Activated T-helper 1 cell treated with anti-CD3 and anti-CD28 coated beads, Interleukin-12 subunit alpha, Interleukin-12 subunit beta, Interleukin-2, Interleukin-4 antibody, amounts not matched to agents 30 ng/mL and 10 ng/mL and 1 ng/mL, durations not matched to agents 14 hours and 24 hours and 36 hours (primary cell): ENCODE measurements at regions of chr17 and their contacts with region 1.

Region 1: GRCh38 chr17:5486204-5487124 is at the start of gene MIS12:
- DNase-seq: peak; percentile 95
- H3K4me3 Mint-ChIP-seq: peak within 1 kb of the TSS; percentile 98
- H3K27ac Mint-ChIP-seq: peak within 1 kb of the TSS; percentile 96
- H3K4me1 Mint-ChIP-seq: peaks cover 49% of the 10 kb centered on the region
- H3K27me3 Mint-ChIP-seq: no peaks in the 10 kb centered on the region
- total RNA-seq, gene MIS12: 38.1 and 39.6 TPM in 2 replicates

Region 2: DNA sequence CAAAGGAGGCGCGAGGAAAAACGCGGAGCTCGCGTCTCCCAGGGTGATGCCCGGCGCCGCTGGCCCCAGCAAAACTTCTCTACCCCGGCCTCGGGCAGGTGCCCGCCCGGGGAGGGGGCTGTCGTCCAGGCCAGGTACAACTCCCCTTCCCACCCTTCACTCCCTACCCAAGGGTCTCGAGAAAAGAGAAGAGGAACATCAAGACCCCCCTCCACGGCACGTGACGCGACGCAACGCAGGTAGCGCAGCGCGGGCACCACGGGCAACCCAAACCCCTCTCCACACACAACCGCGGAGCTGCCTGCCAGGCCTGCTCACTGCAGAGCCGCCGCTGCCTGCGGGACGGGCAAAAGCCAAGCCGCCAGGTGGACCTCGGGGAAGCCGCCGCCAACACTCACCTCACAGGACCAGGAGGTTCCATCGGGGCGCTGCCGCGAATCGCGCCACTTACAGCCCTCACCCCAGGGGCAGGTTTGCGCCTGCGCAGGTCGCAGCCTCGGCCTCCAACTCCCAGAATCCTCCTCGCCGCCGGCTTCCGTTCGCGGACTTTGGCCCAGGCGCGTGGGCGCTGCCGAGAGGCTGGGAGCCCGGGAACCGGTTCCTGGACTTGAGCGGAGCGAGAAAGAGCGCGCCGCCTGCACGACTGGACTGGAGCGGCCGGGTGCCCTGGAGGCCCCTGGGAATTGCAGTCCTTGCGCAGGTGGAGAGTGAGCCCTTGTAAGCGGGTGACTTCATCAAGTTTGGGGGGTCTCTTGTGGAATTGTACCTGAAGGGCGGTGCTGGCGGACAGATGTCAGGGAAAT is 374.9 kb before region 1 on chr17 and contains the start of gene ZNF232:
- intact Hi-C with region 1: loop called (anchors 5 kb)
- DNase-seq: peak; percentile 91
- H3K4me3 Mint-ChIP-seq: peak within 1 kb of the TSS; percentile 86
- H3K27ac Mint-ChIP-seq: peak within 1 kb of the TSS; percentile 79
- H3K4me1 Mint-ChIP-seq: peaks cover 13% of the 10 kb centered on the region
- H3K27me3 Mint-ChIP-seq: peaks cover 6% of the 10 kb centered on the region
- total RNA-seq, gene ZNF232: 17.3 and 19.3 TPM in 2 replicates

Region 3: GRCh38 chr17:5419356-5419958 is 67.0 kb before region 1 on chr17 and contains the start of gene NUP88:
- intact Hi-C with region 1: loop called (anchors 1 kb)
- DNase-seq: peak; percentile 95
- H3K4me3 Mint-ChIP-seq: peak within 1 kb of the TSS; percentile 100
- H3K27ac Mint-ChIP-seq: peak within 1 kb of the TSS; percentile 99
- H3K4me1 Mint-ChIP-seq: peaks cover 32% of the 10 kb centered on the region
- H3K27me3 Mint-ChIP-seq: no peaks in the 10 kb centered on the region
- total RNA-seq, gene NUP88: 165 and 170 TPM in 2 replicates

Region 4: DNA sequence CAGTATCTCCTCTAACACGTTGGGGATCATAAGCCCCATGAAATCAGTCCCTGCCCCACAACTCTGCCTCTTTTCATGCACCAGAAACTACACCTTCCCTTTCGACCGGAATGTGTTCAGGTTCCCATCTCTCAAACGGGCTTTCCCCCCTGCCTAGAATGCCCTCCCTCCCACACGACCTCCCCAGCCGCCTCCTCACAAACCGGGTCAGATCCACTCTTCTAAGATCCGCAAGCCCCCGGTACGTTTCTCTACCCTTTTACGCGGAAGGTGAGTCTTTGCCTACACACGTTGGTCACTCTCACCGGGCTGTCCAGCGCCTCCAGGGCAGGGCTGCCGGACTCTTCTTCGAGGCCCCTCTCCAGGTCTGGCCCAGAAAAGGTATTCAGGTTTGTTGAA is 18.4 kb before region 1 on chr17:
- intact Hi-C with region 1: loop called (anchors 1 kb)
- DNase-seq: no peak
- H3K4me3 Mint-ChIP-seq: peak overlapping the region; percentile 92
- H3K27ac Mint-ChIP-seq: peak overlapping the region; percentile 46
- H3K4me1 Mint-ChIP-seq: peaks cover 50% of the 10 kb centered on the region
- H3K27me3 Mint-ChIP-seq: no peaks in the 10 kb centered on the region

Region 5: GRCh38 chr17:5526821-5527598 is 40.5 kb after region 1 on chr17:
- intact Hi-C with region 1: loop called (anchors 1 kb)
- DNase-seq: peak; percentile 18
- H3K4me3 Mint-ChIP-seq: no peak overlapping the region
- H3K27ac Mint-ChIP-seq: peak overlapping the region; percentile 84
- H3K4me1 Mint-ChIP-seq: peaks cover 13% of the 10 kb centered on the region
- H3K27me3 Mint-ChIP-seq: no peaks in the 10 kb centered on the region

Region 6: DNA sequence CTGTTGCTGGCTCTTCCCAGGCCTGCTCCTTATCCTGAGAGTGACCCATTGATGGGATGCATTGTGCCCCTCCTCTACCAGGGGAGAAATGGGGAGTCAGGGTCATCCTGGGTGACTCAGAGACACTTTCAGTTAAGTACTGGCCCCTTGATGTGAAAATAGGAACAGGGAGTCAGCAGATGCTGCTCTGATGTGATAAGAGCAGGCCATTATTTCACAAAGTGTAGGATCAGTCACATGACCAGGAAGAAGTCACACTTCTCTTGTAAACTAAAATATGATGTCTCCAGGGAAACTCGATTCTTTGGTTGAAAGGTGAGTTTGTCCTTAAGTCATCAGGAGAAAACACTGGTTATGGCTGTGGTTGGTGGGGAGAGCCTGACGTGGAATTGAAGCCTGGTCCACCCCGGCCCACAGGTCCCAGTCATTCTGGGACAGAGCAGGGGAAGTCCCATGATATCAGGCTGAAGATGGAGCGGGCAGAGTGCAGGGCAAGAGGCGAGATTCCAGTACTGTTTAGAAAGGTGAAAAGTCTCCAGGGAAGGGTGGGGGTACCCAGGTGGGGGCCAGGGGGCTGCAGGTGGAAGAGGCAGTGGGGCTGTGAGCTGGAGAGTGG is 186.5 kb after region 1 on chr17:
- intact Hi-C with region 1: no loop called
- DNase-seq: no peak
- H3K4me3 Mint-ChIP-seq: no peak overlapping the region
- H3K27ac Mint-ChIP-seq: no peak overlapping the region
- H3K4me1 Mint-ChIP-seq: no peaks in the 10 kb centered on the region
- H3K27me3 Mint-ChIP-seq: peaks cover 10% of the 10 kb centered on the region

Region 7: DNA sequence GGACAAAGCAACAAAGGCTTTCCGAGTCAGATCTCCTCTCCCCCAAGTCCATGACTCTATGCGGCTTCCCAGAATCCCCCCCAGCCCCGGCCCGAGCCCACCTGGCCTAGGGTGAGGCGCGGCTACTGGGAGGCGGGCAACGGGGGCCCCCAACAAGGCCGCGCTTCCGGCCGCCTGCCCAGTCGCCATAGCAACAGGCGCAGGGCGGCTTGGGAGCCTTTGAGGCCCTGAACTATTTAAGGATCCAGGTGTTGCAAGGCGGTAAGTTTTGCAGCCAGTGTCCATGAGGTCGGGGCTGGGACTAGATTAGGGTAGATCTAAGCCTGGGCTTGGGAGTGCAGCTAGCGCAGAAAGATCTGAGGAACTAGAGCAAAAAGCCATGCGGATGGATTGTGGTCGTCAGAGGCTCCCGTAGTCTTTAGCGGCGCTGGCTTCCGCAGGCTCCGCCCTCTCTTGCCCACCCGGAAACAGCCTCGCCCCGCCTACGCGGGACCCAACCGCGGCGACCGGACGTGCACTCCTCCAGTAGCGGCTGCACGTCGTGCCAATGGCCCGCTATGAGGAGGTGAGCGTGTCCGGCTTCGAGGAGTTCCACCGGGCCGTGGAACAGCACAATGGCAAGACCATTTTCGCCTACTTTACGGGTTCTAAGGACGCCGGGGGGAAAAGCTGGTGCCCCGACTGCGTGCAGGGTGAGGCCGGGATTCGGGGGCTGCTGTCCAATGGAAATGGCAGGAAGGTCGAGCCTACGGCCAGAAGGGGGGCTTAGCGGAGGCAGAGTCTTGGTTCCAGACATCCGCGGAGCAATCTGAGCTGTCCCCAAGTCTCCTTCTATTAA is 1154.3 kb after region 1 on chr17 and contains the starts of genes KIAA0753 and TXNDC17:
- intact Hi-C with region 1: loop called (anchors 10 kb)
- DNase-seq: peak; percentile 94
- H3K4me3 Mint-ChIP-seq: peak within 1 kb of the TSS; percentile 97
- H3K27ac Mint-ChIP-seq: peak within 1 kb of the TSS; percentile 99
- H3K4me1 Mint-ChIP-seq: peaks cover 60% of the 10 kb centered on the region
- H3K27me3 Mint-ChIP-seq: no peaks in the 10 kb centered on the region
- total RNA-seq, gene KIAA0753: 18.2 and 22.2 TPM in 2 replicates
- total RNA-seq, gene TXNDC17: 94.0 and 95.2 TPM in 2 replicates